IMR-90 (cell line): ENCODE measurements at regions of chr7 and their contacts with region 1.

Region 1: DNA sequence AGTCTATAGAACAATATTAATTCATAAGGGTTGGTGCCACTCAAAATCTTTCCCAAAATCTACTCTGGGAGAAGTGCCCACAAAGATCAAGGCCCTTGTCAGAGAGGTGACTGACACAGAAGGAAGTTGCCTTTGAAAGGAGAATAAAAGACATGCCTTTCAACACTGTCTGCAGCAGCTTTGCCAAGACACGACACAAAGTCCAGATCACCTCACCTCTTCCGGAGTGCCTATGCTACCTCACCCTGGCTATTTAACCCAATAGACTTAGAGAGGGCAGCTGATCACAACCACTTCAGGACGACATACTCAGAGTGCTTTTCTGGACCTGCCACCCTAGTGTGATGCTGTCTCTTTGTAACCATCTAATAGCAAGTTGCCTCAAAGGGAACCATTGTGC is 49.0 kb upstream of the YAE1 start:
- DNase-seq: no peak
- ATAC-seq: no peak
- H3K4me3 ChIP-seq: no peak overlapping the region
- H3K27ac ChIP-seq: no peak overlapping the region
- H3K4me1 ChIP-seq: no peaks in the 10 kb centered on the region
- H3K27me3 ChIP-seq: peaks cover 20% of the 10 kb centered on the region
- CTCF ChIP-seq: no peak
- POLR2A ChIP-seq: no peak
- RAD21 ChIP-seq: no peak

Region 2: DNA sequence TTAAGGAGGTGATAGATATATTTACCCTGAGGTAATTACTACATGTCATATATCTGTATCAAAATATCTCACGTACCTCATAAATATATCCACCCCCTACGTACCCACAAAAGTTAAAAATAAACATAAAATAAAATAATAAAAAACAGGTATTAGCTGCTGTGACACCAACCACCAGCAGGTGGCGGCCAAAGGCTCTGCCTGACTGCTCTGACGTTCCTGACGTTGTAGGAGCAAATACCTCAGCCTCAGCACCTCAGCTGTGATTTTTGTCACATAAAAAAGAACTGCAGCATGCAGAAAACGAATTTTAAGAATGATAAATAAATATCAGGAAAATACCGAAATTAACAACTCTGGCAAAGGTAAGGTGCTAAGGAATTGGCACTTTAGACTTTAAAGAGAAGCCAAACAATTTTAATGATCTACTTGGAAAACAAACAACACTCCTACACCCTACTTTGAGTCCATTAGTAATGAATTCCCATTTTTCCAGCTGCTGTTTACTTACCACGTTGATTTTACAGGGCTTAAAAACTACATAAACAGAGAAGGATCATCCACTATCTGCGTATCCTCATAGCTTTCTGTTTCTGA is 1118.4 kb before region 1 on chr7:
- CTCF ChIA-PET with region 1: no interaction called
- POLR2A ChIA-PET with region 1: no interaction called
- dilution Hi-C with region 1: no loop called
- in situ Hi-C with region 1: loop called (anchors 25 kb)
- intact Hi-C with region 1: loop called (anchors 1 kb)
- DNase-seq: peak; percentile 48
- ATAC-seq: peak; percentile 94
- H3K4me3 ChIP-seq: no peak overlapping the region
- H3K27ac ChIP-seq: no peak overlapping the region
- H3K4me1 ChIP-seq: no peaks in the 10 kb centered on the region
- H3K27me3 ChIP-seq: no peaks in the 10 kb centered on the region
- CTCF ChIP-seq: peak; percentile 90
- POLR2A ChIP-seq: no peak
- RAD21 ChIP-seq: peak; percentile 73

Region 3: DNA sequence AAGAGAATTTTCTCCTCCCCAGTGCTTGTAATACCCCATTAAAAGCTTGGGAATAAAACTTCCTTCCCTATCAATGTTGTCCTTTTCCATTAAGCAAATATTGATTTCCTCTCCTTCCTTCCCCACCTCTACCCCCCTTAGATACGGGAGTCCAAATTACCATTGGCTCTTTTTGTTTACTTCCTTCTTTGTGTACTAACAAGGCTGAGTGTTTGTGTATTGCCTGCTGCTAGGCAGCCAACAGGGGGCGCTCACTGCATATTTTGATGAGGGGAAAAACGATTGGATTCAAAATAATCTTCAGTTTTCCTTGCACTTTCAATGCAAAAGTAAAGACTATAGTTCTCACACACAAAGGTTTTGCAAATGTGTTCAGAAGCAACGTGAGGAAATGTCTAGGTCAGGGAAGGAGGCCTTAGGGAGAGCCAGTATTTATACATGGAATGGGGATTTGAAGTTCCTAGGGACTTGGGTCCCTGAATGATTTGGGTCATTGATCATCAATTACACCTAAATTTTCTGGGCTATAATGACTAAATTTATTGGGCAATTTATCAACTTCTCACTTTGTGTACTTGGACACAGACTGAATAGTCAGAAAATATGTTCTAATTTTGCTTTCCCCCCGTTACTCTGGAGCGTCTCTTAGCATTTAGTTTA is 584.6 kb before region 1 on chr7:
- CTCF ChIA-PET with region 1: no interaction called
- POLR2A ChIA-PET with region 1: no interaction called
- dilution Hi-C with region 1: no loop called
- in situ Hi-C with region 1: no loop called
- intact Hi-C with region 1: loop called (anchors 1 kb)
- DNase-seq: peak; percentile 25
- ATAC-seq: peak; percentile 53; the same call in 1 of the 2 replicates
- H3K4me3 ChIP-seq: no peak overlapping the region
- H3K27ac ChIP-seq: no peak overlapping the region
- H3K4me1 ChIP-seq: no peaks in the 10 kb centered on the region
- H3K27me3 ChIP-seq: no peaks in the 10 kb centered on the region; the same call in 1 of the 2 replicates
- CTCF ChIP-seq: peak; percentile 74
- POLR2A ChIP-seq: no peak
- RAD21 ChIP-seq: peak; percentile 55

Region 4: DNA sequence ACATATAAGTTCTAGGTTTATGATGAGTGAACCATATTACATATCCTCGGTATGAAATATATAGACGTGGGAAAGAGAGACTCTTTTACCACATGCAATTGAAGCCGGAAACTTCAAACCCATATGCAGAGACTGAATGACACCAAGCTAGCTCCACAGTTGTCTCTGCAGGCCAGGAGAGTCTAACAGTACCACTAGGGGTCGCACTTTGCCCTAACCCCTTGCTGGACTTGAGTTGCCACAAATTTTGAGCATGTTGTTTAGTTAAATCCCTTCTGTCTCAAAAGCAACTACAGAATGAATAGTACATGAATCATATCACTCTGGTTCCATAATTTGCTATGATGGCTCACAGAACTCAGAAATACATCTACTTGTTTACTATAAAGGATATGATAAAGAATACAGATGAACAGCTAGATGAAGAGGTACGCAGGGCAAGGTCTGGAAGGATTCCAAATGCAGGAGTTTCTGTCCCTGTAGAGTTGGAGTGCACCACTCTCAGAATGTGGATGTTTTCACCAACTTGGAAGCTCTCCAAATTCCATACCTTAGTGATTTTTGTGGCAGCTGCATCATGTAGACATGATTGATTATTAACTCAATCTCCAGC is 63.4 kb before region 1 on chr7:
- CTCF ChIA-PET with region 1: interaction called, 5 read pairs
- POLR2A ChIA-PET with region 1: no interaction called
- dilution Hi-C with region 1: no loop called
- in situ Hi-C with region 1: no loop called
- intact Hi-C with region 1: loop called (anchors 1 kb)
- DNase-seq: peak; percentile 59
- ATAC-seq: peak; percentile 74
- H3K4me3 ChIP-seq: no peak overlapping the region
- H3K27ac ChIP-seq: no peak overlapping the region
- H3K4me1 ChIP-seq: no peaks in the 10 kb centered on the region
- H3K27me3 ChIP-seq: peaks cover 3% of the 10 kb centered on the region
- CTCF ChIP-seq: peak; percentile 61
- POLR2A ChIP-seq: no peak
- RAD21 ChIP-seq: peak; percentile 53

Region 5: GRCh38 chr7:39580149-39580874 is 63.1 kb after region 1 on chr7:
- CTCF ChIA-PET with region 1: no interaction called
- POLR2A ChIA-PET with region 1: no interaction called
- dilution Hi-C with region 1: no loop called
- in situ Hi-C with region 1: no loop called
- intact Hi-C with region 1: no loop called
- DNase-seq: peak; percentile 97
- ATAC-seq: peak; percentile 98
- H3K4me3 ChIP-seq: no peak overlapping the region
- H3K27ac ChIP-seq: no peak overlapping the region
- H3K4me1 ChIP-seq: no peaks in the 10 kb centered on the region
- H3K27me3 ChIP-seq: no peaks in the 10 kb centered on the region
- CTCF ChIP-seq: peak; percentile 90
- POLR2A ChIP-seq: peak; percentile 38; the same call in 1 of the 2 replicates
- RAD21 ChIP-seq: peak; percentile 98

Region 6: DNA sequence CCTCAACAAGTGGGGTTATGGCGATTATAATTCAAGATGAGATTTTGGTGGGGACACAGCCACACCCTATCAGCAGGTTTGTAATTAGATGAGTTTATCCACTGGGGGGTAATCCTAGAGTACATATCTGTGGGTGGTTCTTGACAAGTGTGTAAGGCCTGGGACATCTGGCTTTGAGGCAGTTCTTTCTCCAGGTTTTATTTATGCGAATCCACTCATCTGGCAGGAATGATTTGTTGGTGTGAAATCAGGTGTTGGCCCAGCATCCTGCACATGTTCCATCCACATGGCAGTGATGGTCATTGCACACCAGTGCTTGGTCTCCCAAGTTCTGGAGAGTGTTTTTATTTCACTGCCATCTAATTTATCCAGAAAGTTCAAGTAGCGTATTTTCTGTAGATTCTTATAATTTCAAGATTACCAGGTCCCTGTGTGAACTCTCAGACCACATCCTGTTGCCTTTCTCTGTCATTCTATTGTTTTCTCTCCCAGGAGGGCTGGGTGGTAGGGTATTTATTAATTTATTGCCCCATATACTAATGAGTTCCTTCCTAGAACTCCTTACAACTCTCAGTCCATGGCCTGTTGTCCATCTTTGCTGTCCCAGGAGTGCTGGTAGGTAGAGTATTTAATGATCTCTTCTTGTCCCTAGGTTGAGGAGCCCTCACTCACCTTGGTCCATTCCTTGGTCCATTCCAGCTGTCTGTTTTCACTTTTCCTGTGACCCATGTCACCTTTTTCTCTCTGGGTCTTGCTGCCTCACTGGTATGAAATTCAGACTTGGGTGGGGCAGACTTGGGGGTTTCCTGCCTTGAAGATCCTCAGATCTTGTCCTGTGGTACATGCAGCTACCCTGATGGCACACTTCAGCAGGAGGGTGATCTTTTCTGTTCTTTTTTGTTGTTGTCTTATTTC is 116.6 kb after region 1 on chr7:
- CTCF ChIA-PET with region 1: no interaction called
- POLR2A ChIA-PET with region 1: no interaction called
- dilution Hi-C with region 1: no loop called
- in situ Hi-C with region 1: no loop called
- intact Hi-C with region 1: no loop called
- DNase-seq: no peak
- ATAC-seq: no peak
- H3K4me3 ChIP-seq: no peak overlapping the region
- H3K27ac ChIP-seq: no peak overlapping the region
- H3K4me1 ChIP-seq: peaks cover 6% of the 10 kb centered on the region
- H3K27me3 ChIP-seq: no peaks in the 10 kb centered on the region
- CTCF ChIP-seq: no peak
- POLR2A ChIP-seq: no peak
- RAD21 ChIP-seq: no peak